ENCODE measurements at regions of chr12 and their contacts with region 1.

Region 1: GRCh38 chr12:117279606-117280005 is 81.8 kb downstream of the NOS1 start:
- DNase-seq: no peak
- H3K4me3 Mint-ChIP-seq: no peak overlapping the region
- H3K27ac Mint-ChIP-seq: no peak overlapping the region
- H3K4me1 Mint-ChIP-seq: no peaks in the 10 kb centered on the region
- H3K27me3 Mint-ChIP-seq: peaks cover 3% of the 10 kb centered on the region

Region 2: GRCh38 chr12:117243488-117243887 is 36.1 kb before region 1 on chr12:
- intact Hi-C with region 1: no loop called
- DNase-seq: no peak
- H3K4me3 Mint-ChIP-seq: no peak overlapping the region
- H3K27ac Mint-ChIP-seq: no peak overlapping the region
- H3K4me1 Mint-ChIP-seq: no peaks in the 10 kb centered on the region
- H3K27me3 Mint-ChIP-seq: no peaks in the 10 kb centered on the region

Region 3: DNA sequence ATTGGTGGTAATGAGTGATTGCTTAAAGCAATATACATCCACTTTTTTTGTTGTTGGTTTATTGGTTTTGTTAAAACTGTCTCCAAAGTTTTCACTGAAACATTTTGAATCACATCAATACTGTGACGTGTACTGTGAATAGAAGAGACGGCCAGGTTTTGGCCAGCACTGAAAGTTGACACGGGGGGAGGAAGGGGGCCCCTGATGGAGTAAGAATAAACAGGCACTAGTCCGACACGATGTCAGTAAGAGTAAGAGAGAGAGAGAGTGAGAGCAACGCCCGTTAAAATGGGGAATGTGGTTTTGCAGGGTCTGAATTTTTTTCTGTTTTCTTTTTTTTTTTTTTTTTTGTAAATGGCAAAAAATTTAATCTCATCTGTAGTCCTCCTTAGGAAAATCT is 871.0 kb after region 1 on chr12:
- intact Hi-C with region 1: loop called (anchors 5 kb)
- DNase-seq: no peak
- H3K4me3 Mint-ChIP-seq: no peak overlapping the region
- H3K27ac Mint-ChIP-seq: no peak overlapping the region
- H3K4me1 Mint-ChIP-seq: no peaks in the 10 kb centered on the region
- H3K27me3 Mint-ChIP-seq: no peaks in the 10 kb centered on the region